Activated CD4-positive, alpha-beta T cell treated with anti-CD3 and anti-CD28 coated beads for 36 hours (primary cell): ENCODE measurements at regions of chr9 and their contacts with region 1.

Region 1: DNA sequence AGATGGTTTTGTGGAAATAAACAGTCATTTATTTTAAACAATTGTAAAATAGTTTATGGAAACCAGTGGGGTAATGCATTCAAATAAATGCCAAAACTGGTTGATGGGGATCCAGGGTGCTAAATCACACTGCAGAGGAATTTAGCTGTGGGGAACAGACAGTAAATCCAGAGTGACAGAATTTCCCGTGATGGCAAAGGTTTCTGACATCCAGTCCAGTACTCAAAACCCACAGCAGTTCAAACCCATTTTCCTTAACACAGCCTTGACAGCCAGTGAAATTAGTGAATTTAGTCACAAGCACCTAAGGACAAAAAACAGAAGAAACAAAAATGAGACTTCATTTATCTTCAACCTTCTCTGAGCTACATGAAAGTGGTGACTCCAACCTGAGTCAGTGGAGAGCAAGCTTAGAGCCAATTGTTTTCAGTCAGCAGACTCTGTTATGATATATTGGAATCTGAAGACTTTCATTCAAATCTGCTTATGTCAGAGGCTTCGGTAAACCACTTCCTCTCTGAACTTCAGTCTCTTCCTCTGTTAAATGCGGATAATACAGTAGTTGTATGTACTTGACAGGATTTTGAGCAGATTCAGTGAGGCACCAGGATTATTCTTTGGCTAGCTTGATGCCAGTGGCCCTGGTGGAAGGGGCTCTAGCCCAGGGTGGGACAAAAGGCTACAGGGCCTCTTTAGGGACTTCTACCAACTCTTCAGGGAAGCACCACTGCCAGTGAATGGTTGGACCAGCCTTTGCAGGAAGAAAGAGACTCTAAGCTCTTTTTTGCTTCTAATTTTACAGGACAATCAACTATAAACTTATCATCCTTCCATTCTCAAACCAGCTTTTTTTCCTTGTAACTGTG is 185.3 kb downstream of the MAPKAP1 start:
- DNase-seq: peak; percentile 63
- ATAC-seq: peak; percentile 97
- H3K4me3 Mint-ChIP-seq: peak overlapping the region; percentile 27
- H3K27ac Mint-ChIP-seq: peak overlapping the region; percentile 86
- H3K4me1 Mint-ChIP-seq: peaks cover 44% of the 10 kb centered on the region
- H3K27me3 Mint-ChIP-seq: no peaks in the 10 kb centered on the region

Region 2: DNA sequence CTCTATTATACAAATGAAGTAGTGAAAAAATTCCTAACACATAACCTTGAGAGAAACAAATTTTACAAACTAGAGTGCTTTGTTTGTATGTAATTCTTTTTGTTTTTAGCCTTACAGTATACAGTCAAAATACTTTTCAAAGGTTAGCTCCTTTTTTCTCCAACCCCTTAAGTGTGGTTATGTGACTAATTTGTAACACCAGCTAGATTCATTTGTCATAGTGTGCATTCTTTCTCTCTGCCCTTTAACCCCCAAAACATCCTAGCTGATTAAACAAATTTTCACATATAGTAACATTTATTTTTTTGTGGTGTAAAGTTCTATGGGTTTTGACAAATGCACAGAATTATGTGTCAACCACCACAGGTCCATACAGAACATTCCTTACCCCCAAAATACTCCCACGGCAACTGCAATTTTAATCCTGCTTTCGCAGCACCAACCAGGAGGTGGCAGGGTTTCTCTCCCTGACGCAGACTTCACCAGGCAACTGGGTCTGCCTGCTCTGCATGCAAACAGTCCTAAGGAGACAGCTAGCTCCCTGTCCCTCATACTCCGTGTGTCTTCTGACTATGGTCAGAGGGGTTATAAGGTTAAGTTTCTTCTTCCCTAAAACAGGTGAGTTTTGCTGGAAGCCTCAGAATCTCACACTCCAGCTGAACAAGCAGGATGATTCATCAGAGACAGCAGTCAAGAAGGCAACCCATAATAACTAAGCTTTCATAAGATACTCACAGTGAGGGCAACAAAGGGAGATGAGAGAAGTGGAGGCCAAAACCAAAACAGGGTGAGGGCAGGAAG is 970.0 kb before region 1 on chr9:
- CTCF ChIA-PET with region 1: no interaction called
- POLR2A ChIA-PET with region 1: no interaction called
- intact Hi-C with region 1: loop called in 1 of 2 experiments (anchors 5 kb)
- DNase-seq: peak; percentile 63
- ATAC-seq: peak; percentile 91
- H3K4me3 Mint-ChIP-seq: no peak overlapping the region
- H3K27ac Mint-ChIP-seq: no peak overlapping the region
- H3K4me1 Mint-ChIP-seq: peaks cover 8% of the 10 kb centered on the region
- H3K27me3 Mint-ChIP-seq: peaks cover 4% of the 10 kb centered on the region

Region 3: DNA sequence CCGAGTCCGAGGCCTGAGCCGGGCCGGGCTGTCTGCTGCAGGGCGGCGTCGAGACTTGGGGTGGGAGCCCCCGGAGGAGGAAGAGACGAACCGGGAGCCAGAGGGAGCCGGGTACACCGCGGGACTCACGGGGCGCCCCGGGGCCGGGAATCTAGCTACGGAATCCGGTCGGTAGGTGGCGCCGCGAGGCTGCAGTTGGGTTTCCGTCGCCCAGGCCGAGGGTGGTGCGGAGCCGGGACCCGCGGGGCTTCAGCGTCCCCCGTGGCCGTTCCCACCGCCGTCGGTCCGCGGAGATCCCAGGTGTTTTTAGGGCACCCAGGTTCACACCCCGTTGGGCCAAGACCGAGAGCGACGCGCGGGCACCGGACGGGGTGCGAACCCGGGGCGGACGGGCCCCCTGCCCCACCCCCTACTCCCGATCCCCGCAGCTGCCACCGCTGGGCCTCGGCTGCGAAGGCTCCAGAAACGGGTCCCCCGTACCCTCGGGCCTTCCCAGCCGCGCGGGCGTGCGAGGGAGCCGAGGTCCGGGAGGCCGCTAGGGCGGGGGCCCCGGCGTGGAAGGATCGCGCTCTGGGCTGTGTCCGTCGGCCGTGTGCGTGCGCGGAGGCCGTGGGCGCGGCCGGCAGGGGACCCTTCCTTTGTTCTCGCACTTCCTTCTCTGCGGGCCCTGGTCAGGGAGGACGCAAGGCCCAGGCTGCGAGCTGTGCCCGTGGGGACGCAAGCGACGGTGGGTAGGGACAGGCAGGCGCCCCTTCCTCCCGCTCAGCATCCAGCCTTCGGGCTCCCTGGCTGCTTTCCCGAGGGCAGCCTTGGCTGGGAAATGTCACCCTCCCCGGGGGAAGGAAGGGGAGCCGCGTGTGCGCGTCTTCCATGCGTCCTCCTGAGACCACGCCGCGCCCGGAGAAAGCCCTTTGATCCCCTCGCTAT is 113.5 kb before region 1 on chr9:
- CTCF ChIA-PET with region 1: interaction called, 3 read pairs
- POLR2A ChIA-PET with region 1: no interaction called
- intact Hi-C with region 1: loop called in 1 of 2 experiments (anchors 2 kb)
- DNase-seq: peak; percentile 89
- ATAC-seq: peak; percentile 76
- H3K4me3 Mint-ChIP-seq: peak overlapping the region; percentile 62
- H3K27ac Mint-ChIP-seq: no peak overlapping the region
- H3K4me1 Mint-ChIP-seq: peaks cover 13% of the 10 kb centered on the region
- H3K27me3 Mint-ChIP-seq: peaks cover 27% of the 10 kb centered on the region

Region 4: DNA sequence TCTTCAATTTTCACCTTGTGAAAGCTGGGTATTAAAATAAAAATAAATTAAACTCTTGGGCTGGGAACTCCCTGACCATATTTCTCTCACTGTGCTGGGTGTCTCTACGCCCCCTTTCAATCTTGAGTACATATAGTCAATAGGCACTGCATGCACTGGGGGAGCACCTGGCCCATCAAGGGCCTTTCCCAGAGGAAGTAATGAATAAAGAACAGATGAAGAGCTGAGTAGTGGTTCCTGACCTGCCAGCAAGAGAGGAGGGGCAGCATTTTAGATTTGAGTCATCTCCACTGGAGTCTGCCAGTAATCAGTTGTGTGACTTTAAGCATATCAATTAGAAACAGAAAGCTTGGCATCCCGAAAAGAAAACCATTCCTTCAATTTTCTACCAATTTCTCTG is 179.1 kb after region 1 on chr9:
- CTCF ChIA-PET with region 1: no interaction called
- POLR2A ChIA-PET with region 1: no interaction called
- intact Hi-C with region 1: loop called (anchors 2 to 5 kb)
- DNase-seq: peak; percentile 70
- ATAC-seq: peak; percentile 91
- H3K4me3 Mint-ChIP-seq: no peak overlapping the region
- H3K27ac Mint-ChIP-seq: no peak overlapping the region
- H3K4me1 Mint-ChIP-seq: peaks cover 65% of the 10 kb centered on the region
- H3K27me3 Mint-ChIP-seq: no peaks in the 10 kb centered on the region

Region 5: DNA sequence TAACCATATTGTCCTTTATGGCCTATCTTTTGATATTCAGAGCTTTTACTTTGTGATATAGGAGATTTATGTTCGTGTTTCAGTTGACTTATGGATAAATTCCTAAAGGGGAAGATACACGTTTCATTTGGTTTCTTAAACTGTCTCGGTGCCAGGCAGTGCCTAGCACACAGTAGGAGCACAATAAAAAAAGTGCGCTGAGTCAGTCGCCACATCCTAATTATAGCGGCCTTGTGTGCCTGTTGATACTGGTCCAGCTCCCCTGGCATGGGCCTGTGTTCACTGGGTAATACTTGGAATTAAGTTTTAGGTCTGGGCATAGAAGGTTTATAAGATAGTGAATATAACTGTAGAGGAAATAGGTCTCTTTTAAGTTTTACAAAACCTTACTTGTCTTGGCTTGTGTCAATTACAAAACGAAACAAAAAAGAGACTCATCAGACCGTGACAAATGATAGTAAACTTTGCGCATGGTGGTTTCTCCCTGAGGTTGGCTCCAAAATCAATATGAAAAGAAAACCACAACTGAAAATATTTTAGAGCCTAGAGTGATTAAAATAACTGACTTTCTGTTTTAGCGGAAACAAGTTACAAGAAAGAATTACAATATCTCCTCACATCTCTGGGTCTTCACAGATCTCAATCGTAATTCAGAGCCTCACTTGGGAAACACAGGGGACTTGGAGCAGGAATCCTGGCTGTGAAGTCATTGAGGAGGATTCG is 889.7 kb after region 1 on chr9:
- CTCF ChIA-PET with region 1: no interaction called
- POLR2A ChIA-PET with region 1: no interaction called
- intact Hi-C with region 1: loop called in 1 of 2 experiments (anchors 2 kb)
- DNase-seq: peak; percentile 62
- ATAC-seq: peak; percentile 89
- H3K4me3 Mint-ChIP-seq: peak overlapping the region; percentile 54
- H3K27ac Mint-ChIP-seq: peak overlapping the region; percentile 72
- H3K4me1 Mint-ChIP-seq: peaks cover 35% of the 10 kb centered on the region
- H3K27me3 Mint-ChIP-seq: no peaks in the 10 kb centered on the region